Gastrocnemius medialis (tissue), 4 donors: ENCODE measurements at regions of chr15 and their contacts with region 1.

Region 1: DNA sequence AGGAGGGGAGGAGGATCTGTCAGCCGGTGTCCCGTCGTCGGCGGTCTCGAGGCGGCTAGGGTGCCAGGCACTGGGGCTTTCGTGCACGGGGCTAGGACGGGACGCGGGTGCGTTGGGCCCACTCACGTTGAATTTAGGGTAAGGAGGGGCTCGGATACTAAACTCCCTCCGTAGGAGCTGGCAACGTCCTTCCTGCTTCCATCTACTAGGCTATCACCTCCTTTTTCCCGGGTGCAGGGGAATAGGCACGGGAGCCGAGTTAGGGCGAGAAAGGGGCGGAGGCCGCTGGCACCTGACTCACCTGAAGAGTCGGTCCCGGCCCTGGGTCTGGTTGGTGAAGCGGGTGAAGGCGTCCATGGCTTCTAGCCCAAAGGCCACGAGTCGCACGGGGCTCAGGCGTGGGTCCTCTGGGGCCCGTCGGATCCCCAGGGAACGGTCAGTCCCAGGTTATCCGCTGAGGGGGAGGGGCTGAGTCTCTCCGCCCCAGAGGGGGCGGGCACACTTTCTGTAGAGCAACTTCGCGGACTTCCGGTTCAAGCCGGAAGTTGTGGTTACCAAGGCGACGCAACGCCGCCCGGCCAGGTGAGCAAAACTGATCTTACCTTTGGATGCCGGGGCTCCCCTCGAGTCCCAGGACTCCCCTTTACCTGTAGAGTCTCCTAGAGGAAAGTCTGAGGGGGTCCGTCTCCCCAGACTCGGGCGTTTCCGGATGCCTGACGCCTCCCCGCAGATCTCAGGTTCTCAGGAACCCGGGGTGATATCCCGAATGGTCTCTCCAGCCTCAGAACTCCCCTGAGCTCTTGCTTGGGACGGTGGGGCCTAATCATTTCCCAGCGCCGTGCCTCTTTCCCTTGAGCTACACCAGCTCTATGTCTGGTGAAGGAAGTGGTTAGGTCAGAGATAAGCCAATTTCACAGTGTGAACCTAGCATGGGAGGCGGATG is at the starts of genes PEX11A and WDR93:
- DNase-seq: peak; percentile 70 to 78
- ATAC-seq: peak; percentile 92 to 93
- H3K4me3 ChIP-seq: peak within 1 kb of the TSS; percentile 65 to 93 (median 90)
- H3K27ac ChIP-seq: peak within 1 kb of the TSS; percentile 76 to 80 (median 79)
- H3K4me1 ChIP-seq: peaks cover 12% of the 10 kb centered on the region in 2 donors
- H3K27me3 ChIP-seq: no peaks in the 10 kb centered on the region
- CTCF ChIP-seq: no peak
- POLR2A ChIP-seq: peak; percentile 51 to 65
- total RNA-seq, gene PEX11A: 10.0 to 46.4 (median 21.8) TPM
- total RNA-seq, gene WDR93: not detected

Region 2: DNA sequence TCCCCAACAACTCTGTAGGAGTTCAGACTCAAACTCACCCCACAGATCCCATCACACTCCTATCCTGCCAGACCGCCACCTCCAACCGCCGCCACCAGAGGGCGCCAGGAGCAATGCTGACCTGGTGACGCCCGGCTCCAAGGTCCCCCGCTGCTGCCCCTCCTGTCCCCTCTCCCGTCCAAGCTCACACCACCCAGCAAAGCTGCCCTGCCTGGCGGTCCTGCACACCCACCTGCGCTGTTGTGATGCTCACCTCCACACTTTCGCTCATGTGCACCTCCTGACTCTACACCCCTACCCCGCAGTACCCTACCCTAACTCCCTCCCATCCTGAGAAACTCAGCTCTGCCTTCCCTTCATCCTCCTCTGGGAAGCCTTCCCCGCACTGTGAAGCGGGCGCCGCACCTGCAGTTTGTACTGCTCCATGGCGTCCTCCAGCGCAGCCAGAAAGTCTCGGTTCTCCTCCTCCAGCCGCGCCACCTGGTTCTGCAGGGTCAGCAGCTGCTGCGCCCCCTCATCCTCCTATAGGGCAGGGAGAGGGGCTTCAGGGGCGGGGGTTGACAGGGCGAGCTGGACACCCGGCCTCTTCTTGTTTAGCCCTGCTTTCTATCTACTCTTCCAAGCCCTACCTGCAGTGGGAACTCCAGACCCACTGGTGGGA is 43.2 kb before region 1 on chr15:
- in situ Hi-C with region 1: no loop called
- intact Hi-C with region 1: loop called (anchors 10 kb)
- DNase-seq: peak in 1 of 2 donors; percentile 62
- ATAC-seq: peak; percentile 60 to 83
- H3K4me3 ChIP-seq: no peak overlapping the region
- H3K27ac ChIP-seq: no peak overlapping the region
- H3K4me1 ChIP-seq: peaks cover 0 to 3% of the 10 kb centered on the region in 2 donors
- H3K27me3 ChIP-seq: no peaks in the 10 kb centered on the region
- CTCF ChIP-seq: peak; percentile 63 to 88 (median 77)
- POLR2A ChIP-seq: no peak

Region 3: GRCh38 chr15:89845305-89845893 is 154.9 kb after region 1 on chr15:
- in situ Hi-C with region 1: no loop called
- intact Hi-C with region 1: no loop called
- DNase-seq: no peak
- ATAC-seq: peak; percentile 93
- H3K4me3 ChIP-seq: no peak overlapping the region
- H3K27ac ChIP-seq: peak overlapping the region in 2 of 4 donors; percentile 50 to 53
- H3K4me1 ChIP-seq: peaks cover 3 to 19% of the 10 kb centered on the region in 2 donors
- H3K27me3 ChIP-seq: no peaks in the 10 kb centered on the region
- CTCF ChIP-seq: no peak
- POLR2A ChIP-seq: no peak